CD8-positive, alpha-beta T cell (primary cell): ENCODE measurements at regions of chr2 and their contacts with region 1.

Region 1: GRCh38 chr2:98615481-98615880 is 7.1 kb downstream of the UNC50 start:
- DNase-seq: no peak
- ATAC-seq: no peak
- H3K4me3 ChIP-seq: no peak overlapping the region
- H3K4me3 Mint-ChIP-seq: no peak overlapping the region
- H3K27ac ChIP-seq: peak overlapping the region in 1 of 2 experiments; percentile 3
- H3K27ac Mint-ChIP-seq: peak overlapping the region; percentile 88
- H3K4me1 ChIP-seq: peaks cover 11% of the 10 kb centered on the region
- H3K4me1 Mint-ChIP-seq: peaks cover 61% of the 10 kb centered on the region
- H3K27me3 ChIP-seq: no peaks in the 10 kb centered on the region
- H3K27me3 Mint-ChIP-seq: no peaks in the 10 kb centered on the region
- CTCF ChIP-seq: no peak

Region 2: GRCh38 chr2:98460573-98461497 is 154.6 kb before region 1 on chr2:
- CTCF ChIA-PET with region 1: no interaction called
- POLR2A ChIA-PET with region 1: no interaction called
- intact Hi-C with region 1: no loop called
- DNase-seq: peak in 7 of 9 experiments; percentile 50 to 86 (median 73)
- ATAC-seq: peak; percentile 51
- H3K4me3 ChIP-seq: peak overlapping the region in 1 of 2 experiments; percentile 16
- H3K4me3 Mint-ChIP-seq: peak overlapping the region; percentile 66
- H3K27ac ChIP-seq: peak overlapping the region; percentile 41 to 86
- H3K27ac Mint-ChIP-seq: peak overlapping the region; percentile 93
- H3K4me1 ChIP-seq: peaks cover 91% of the 10 kb centered on the region
- H3K4me1 Mint-ChIP-seq: peaks cover 92% of the 10 kb centered on the region
- H3K27me3 ChIP-seq: no peaks in the 10 kb centered on the region
- H3K27me3 Mint-ChIP-seq: no peaks in the 10 kb centered on the region
- CTCF ChIP-seq: no peak

Region 3: DNA sequence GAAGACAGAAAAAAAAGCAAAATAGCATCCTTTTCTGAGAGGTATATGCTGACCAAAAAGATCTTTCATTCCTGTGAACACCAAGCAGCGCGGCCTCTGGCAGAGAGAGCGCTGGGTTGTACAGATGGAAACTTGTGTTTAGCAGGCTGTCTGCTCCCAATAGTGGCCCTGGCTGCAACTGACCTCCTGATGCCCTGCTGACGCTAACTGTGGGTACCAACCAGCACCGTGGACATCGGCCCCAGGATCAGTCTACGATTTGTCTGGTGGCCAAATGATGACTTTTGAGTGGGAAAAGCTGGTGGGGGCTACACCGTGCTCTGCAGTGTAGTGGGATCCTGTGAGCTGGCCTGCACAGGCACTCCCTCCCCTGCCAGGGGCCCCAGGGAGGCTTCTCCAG is 22.9 kb before region 1 on chr2:
- CTCF ChIA-PET with region 1: no interaction called
- POLR2A ChIA-PET with region 1: no interaction called
- intact Hi-C with region 1: no loop called
- DNase-seq: no peak
- ATAC-seq: no peak
- H3K4me3 ChIP-seq: no peak overlapping the region
- H3K4me3 Mint-ChIP-seq: no peak overlapping the region
- H3K27ac ChIP-seq: no peak overlapping the region
- H3K27ac Mint-ChIP-seq: no peak overlapping the region
- H3K4me1 ChIP-seq: no peaks in the 10 kb centered on the region
- H3K4me1 Mint-ChIP-seq: peaks cover 12% of the 10 kb centered on the region
- H3K27me3 ChIP-seq: no peaks in the 10 kb centered on the region
- H3K27me3 Mint-ChIP-seq: no peaks in the 10 kb centered on the region
- CTCF ChIP-seq: no peak

Region 4: DNA sequence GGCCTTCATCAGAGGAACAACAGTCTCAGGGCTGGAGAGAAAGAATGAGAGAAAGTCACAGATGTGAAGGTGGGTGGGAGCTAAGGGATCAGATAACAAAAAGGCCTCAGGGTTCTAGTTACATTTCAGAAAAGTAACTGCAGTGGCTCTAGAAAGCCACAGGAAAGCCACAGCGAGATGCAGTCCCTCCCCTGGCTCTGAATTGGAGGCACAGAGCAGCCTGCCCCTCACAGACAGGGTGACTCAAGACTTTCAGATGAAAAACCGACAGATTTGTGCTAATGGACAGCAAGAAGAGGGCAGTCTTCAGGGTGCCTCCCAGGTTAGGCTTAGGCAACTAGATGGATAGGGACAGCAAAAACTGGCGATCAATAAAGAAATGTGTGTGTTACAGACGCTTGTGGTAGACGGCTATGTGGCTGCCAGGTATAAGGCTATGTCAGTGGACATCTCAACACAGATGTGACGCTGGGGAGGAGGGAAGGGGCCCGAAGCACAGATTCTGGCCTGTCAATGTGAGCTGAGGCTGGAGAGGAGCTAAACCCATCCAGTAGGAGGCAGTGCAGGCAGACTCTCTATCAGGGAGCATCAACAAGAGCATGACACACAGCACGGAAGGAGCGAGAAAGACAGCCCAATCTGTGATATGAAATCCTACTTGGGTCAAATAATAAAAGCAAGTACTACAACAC is 19.1 kb after region 1 on chr2:
- CTCF ChIA-PET with region 1: no interaction called
- POLR2A ChIA-PET with region 1: interaction called, 3 read pairs
- intact Hi-C with region 1: loop called in 1 of 2 experiments (anchors 2 kb)
- DNase-seq: peak in 6 of 9 experiments; percentile 26 to 84 (median 64)
- ATAC-seq: peak; percentile 52
- H3K4me3 ChIP-seq: no peak overlapping the region
- H3K4me3 Mint-ChIP-seq: peak overlapping the region; percentile 63
- H3K27ac ChIP-seq: peak overlapping the region; percentile 12 to 87
- H3K27ac Mint-ChIP-seq: peak overlapping the region; percentile 96
- H3K4me1 ChIP-seq: peaks cover 49% of the 10 kb centered on the region
- H3K4me1 Mint-ChIP-seq: peaks cover 48% of the 10 kb centered on the region
- H3K27me3 ChIP-seq: no peaks in the 10 kb centered on the region
- H3K27me3 Mint-ChIP-seq: no peaks in the 10 kb centered on the region
- CTCF ChIP-seq: peak; percentile 54

Region 5: DNA sequence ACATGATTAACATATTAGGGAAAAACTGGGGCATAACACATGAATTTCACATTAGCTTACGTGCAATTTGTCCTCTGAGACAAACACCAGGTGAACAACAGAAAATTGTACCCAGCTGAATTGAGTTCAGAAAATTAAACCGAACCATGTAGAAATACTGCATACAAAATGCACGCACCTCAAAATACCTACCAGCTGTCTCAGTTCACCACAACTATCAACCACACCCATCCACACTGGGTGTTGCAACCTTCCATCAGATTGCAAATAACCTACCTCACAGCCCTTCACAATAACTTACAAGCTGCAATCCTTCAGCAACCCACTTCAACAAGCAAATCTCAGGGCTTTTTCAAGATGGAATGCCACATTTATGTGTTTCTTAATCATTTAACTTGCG is 48.8 kb after region 1 on chr2:
- CTCF ChIA-PET with region 1: no interaction called
- POLR2A ChIA-PET with region 1: no interaction called
- intact Hi-C with region 1: no loop called
- DNase-seq: peak; percentile 19 to 86 (median 60)
- ATAC-seq: peak; percentile 68
- H3K4me3 ChIP-seq: peak overlapping the region; percentile 19 to 55
- H3K4me3 Mint-ChIP-seq: peak overlapping the region; percentile 64
- H3K27ac ChIP-seq: peak overlapping the region; percentile 54 to 80
- H3K27ac Mint-ChIP-seq: peak overlapping the region; percentile 95
- H3K4me1 ChIP-seq: peaks cover 64% of the 10 kb centered on the region
- H3K4me1 Mint-ChIP-seq: peaks cover 72% of the 10 kb centered on the region
- H3K27me3 ChIP-seq: no peaks in the 10 kb centered on the region
- H3K27me3 Mint-ChIP-seq: no peaks in the 10 kb centered on the region
- CTCF ChIP-seq: no peak